T-cell (primary cell): ENCODE measurements at regions of chr7 and their contacts with region 1.

Region 1: GRCh38 chr7:91880413-91881241 is at the start of gene MTERF1:
- DNase-seq: peak; percentile 82 to 97 (median 91)
- ATAC-seq: peak; percentile 94 to 97 (median 96)
- H3K4me3 ChIP-seq: peak within 1 kb of the TSS; percentile 80 to 97
- H3K4me3 Mint-ChIP-seq: peak within 1 kb of the TSS; percentile 83 to 100 (median 99)
- H3K27ac ChIP-seq: peak within 1 kb of the TSS; percentile 65
- H3K27ac Mint-ChIP-seq: peak within 1 kb of the TSS; percentile 96 to 99
- H3K4me1 ChIP-seq: peaks cover 8 to 17% of the 10 kb centered on the region in 2 experiments
- H3K4me1 Mint-ChIP-seq: peaks cover 44 to 47% (median 46%) of the 10 kb centered on the region in 3 donors
- H3K27me3 ChIP-seq: no peaks in the 10 kb centered on the region
- H3K27me3 Mint-ChIP-seq: no peaks in the 10 kb centered on the region
- total RNA-seq, gene MTERF1: 14.8 to 27.1 (median 21.9) TPM

Region 2: GRCh38 chr7:91424371-91424770 is 456.3 kb before region 1 on chr7:
- CTCF ChIA-PET with region 1: no interaction called
- POLR2A ChIA-PET with region 1: no interaction called
- DNase-seq: no peak
- ATAC-seq: no peak
- H3K4me3 ChIP-seq: no peak overlapping the region
- H3K4me3 Mint-ChIP-seq: no peak overlapping the region
- H3K27ac ChIP-seq: no peak overlapping the region
- H3K27ac Mint-ChIP-seq: no peak overlapping the region
- H3K4me1 ChIP-seq: no peaks in the 10 kb centered on the region
- H3K4me1 Mint-ChIP-seq: no peaks in the 10 kb centered on the region
- H3K27me3 ChIP-seq: no peaks in the 10 kb centered on the region
- H3K27me3 Mint-ChIP-seq: peaks cover 0 to 5% of the 10 kb centered on the region in 2 donors

Region 3: DNA sequence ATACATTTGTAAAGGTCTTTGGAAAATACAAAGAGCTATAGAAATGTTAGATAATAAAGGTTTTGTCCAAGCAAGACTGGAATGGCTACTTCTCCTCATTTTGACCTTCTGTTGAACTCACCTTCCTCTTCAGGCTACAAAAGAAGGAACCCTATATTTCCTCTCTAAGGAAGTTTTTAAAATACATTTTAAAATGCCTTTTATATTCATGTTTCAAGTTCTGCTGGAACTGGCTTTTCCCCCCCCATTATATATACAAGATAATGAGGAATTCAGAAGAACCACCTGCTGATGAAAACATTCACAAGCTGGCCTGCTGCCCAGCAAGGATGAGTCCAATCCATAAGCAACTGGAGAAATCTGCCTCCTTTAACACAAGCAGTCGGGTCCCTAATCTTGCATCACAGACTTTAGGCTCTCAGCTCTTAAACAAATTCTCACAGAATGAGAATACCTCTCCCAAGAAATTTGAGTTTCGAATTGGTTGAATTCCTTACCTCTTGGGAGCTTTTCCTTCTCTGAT is 44.7 kb before region 1 on chr7:
- CTCF ChIA-PET with region 1: interaction called in 1 of 2 experiments, 15 read pairs
- POLR2A ChIA-PET with region 1: no interaction called
- DNase-seq: no peak
- ATAC-seq: no peak
- H3K4me3 ChIP-seq: no peak overlapping the region
- H3K4me3 Mint-ChIP-seq: no peak overlapping the region
- H3K27ac ChIP-seq: no peak overlapping the region
- H3K27ac Mint-ChIP-seq: no peak overlapping the region
- H3K4me1 ChIP-seq: no peaks in the 10 kb centered on the region
- H3K4me1 Mint-ChIP-seq: no peaks in the 10 kb centered on the region
- H3K27me3 ChIP-seq: no peaks in the 10 kb centered on the region
- H3K27me3 Mint-ChIP-seq: no peaks in the 10 kb centered on the region

Region 4: DNA sequence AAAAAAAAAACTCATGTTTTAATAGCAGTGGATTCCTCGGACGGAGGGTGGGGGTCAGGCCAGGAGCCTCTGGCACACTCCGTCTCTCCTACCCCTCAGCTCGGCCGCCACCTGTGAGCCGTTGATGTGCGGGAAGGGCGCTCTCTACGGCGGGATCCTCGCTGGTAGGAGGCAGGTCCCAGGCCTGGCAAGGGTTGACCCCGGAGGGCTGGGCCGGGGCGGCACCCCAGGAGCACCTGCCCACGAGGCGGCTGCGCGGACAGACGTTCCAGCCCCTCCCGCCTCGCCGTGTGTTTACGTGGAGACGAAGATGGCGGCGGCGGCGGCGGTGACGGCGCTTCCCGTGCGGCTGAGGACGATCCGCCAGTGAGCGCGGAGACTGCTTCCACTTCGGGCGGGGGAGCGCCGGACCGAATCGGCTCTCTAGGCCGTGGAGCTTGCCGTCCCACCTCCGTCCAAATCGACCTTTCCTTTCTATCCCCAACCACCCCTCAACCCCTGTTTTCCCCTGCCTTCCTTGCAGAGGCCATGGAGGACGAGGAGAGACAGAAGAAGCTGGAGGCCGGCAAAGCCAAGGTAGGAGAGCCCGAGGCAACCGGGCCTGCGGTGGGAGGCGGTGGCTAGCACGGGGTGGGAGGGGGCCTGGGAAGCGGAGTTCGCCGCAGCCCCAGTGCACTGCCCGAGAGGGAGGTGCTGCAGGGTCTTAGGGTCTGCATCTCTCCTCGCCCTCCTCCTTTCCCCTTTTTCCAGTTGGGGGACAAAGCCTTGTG is 60.1 kb after region 1 on chr7 and contains the start of gene AKAP9:
- CTCF ChIA-PET with region 1: interaction called, 11 to 18 read pairs
- POLR2A ChIA-PET with region 1: interaction called in 1 of 2 experiments, 5 read pairs
- DNase-seq: peak; percentile 70 to 93 (median 85)
- ATAC-seq: peak; percentile 91 to 96 (median 94)
- H3K4me3 ChIP-seq: peak within 1 kb of the TSS; percentile 84 to 86
- H3K4me3 Mint-ChIP-seq: peak within 1 kb of the TSS; percentile 87 to 92 (median 89)
- H3K27ac ChIP-seq: peak within 1 kb of the TSS; percentile 92
- H3K27ac Mint-ChIP-seq: peak within 1 kb of the TSS; percentile 87 to 97
- H3K4me1 ChIP-seq: peaks cover 15 to 20% of the 10 kb centered on the region in 2 experiments
- H3K4me1 Mint-ChIP-seq: peaks cover 43 to 45% (median 45%) of the 10 kb centered on the region in 3 donors
- H3K27me3 ChIP-seq: no peaks in the 10 kb centered on the region
- H3K27me3 Mint-ChIP-seq: no peaks in the 10 kb centered on the region
- total RNA-seq, gene AKAP9: 59.6 to 83.3 (median 69.0) TPM